RWPE1 (cell line): ENCODE measurements at regions of chrX and their contacts with region 1.

Region 1: DNA sequence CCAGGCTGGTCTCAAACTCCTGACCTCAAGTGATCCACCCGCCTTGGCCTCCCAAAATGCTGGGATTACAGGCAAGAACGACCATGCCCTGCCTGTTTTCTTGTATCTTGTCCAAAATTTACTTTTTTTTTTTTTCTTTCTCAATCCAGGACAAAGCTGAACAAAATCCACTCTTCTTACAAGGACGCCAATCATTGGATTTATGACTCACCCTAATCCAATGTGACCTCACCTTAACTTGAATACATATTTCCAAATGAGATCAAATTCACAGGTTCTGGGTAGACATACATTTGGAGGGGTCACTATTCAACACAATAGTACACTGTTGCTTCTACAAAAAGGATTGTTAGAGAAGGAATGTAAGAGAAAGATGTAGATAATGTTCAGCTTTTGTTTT is 18.0 kb upstream of the TSR2 start:
- DNase-seq: no peak
- H3K27ac ChIP-seq: no peak overlapping the region
- CTCF ChIP-seq: no peak

Region 2: GRCh38 chrX:55057675-55058249 is 635.6 kb after region 1 on chrX:
- CTCF ChIA-PET with region 1: interaction called, 12 read pairs
- POLR2A ChIA-PET with region 1: no interaction called
- DNase-seq: peak; percentile 6
- H3K27ac ChIP-seq: no peak overlapping the region
- CTCF ChIP-seq: peak; percentile 67